T-cell (primary cell): ENCODE measurements at regions of chr11 and their contacts with region 1.

Region 1: GRCh38 chr11:46616998-46617675 is at the starts of genes ATG13 and HARBI1:
- DNase-seq: peak; percentile 77 to 95 (median 90)
- ATAC-seq: peak; percentile 96 to 98 (median 97)
- H3K4me3 ChIP-seq: peak within 1 kb of the TSS; percentile 85 to 99
- H3K4me3 Mint-ChIP-seq: peak within 1 kb of the TSS; percentile 92 to 99 (median 94)
- H3K27ac ChIP-seq: peak within 1 kb of the TSS; percentile 98
- H3K27ac Mint-ChIP-seq: peak within 1 kb of the TSS; percentile 100
- H3K4me1 ChIP-seq: peaks cover 14 to 31% of the 10 kb centered on the region in 2 experiments
- H3K4me1 Mint-ChIP-seq: peaks cover 44 to 51% (median 48%) of the 10 kb centered on the region in 3 donors
- H3K27me3 ChIP-seq: no peaks in the 10 kb centered on the region
- H3K27me3 Mint-ChIP-seq: no peaks in the 10 kb centered on the region
- total RNA-seq, gene ATG13: 91.8 to 115 (median 102) TPM
- total RNA-seq, gene HARBI1: 6.7 to 17.3 (median 10.3) TPM

Region 2: DNA sequence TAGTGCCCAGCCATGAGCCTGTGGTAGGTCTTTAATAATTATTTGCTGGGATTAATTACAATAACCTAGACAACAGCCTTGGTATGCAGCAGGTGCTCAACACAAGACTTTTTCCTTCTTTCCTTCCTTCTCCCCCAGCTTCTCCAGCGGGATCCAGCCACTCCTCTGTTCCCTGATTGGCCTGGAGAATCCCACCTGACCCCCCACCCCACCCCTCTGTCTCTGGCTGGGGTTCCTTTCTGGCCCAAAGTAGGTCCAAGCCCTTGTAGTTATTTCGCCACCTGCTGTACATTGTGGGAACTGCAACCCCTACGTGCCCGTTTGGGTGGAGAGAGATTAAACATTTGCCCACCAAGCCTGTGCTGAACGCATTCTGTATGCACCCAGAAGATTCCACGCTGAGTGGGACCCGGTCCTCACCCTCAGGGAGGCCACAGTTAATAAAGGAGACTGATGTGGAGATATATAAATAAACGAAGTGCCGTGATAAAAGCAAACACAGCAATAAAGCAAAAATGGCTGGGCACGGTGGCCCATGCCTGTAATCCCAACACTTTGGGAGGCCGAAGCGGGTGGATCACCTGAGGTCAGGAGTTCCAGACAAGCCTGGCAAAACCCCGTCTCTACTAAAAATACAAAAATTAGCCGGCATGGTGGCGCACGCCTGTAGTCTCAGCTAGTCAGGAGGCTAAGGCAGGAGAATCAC is 302.0 kb before region 1 on chr11:
- CTCF ChIA-PET with region 1: no interaction called
- POLR2A ChIA-PET with region 1: interaction called in 1 of 2 experiments, 10 read pairs
- DNase-seq: peak; percentile 26 to 86 (median 64)
- ATAC-seq: peak; percentile 63 to 81 (median 72)
- H3K4me3 ChIP-seq: no peak overlapping the region
- H3K4me3 Mint-ChIP-seq: no peak overlapping the region
- H3K27ac ChIP-seq: no peak overlapping the region
- H3K27ac Mint-ChIP-seq: peak overlapping the region in 1 of 2 donors; percentile 81
- H3K4me1 ChIP-seq: peaks cover 18 to 31% of the 10 kb centered on the region in 2 experiments
- H3K4me1 Mint-ChIP-seq: peaks cover 20 to 32% (median 22%) of the 10 kb centered on the region in 3 donors
- H3K27me3 ChIP-seq: peaks cover 0 to 27% of the 10 kb centered on the region in 2 experiments
- H3K27me3 Mint-ChIP-seq: no peaks in the 10 kb centered on the region

Region 3: GRCh38 chr11:46489661-46490560 is 127.2 kb before region 1 on chr11:
- CTCF ChIA-PET with region 1: interaction called, 3 to 32 read pairs
- POLR2A ChIA-PET with region 1: interaction called in 1 of 2 experiments, 5 read pairs
- DNase-seq: peak in 25 of 35 experiments; percentile 2 to 55 (median 12)
- ATAC-seq: peak; percentile 52 to 66 (median 65)
- H3K4me3 ChIP-seq: no peak overlapping the region
- H3K4me3 Mint-ChIP-seq: no peak overlapping the region
- H3K27ac ChIP-seq: no peak overlapping the region
- H3K27ac Mint-ChIP-seq: no peak overlapping the region
- H3K4me1 ChIP-seq: no peaks in the 10 kb centered on the region
- H3K4me1 Mint-ChIP-seq: peaks cover 5 to 14% (median 7%) of the 10 kb centered on the region in 3 donors
- H3K27me3 ChIP-seq: no peaks in the 10 kb centered on the region
- H3K27me3 Mint-ChIP-seq: no peaks in the 10 kb centered on the region

Region 4: DNA sequence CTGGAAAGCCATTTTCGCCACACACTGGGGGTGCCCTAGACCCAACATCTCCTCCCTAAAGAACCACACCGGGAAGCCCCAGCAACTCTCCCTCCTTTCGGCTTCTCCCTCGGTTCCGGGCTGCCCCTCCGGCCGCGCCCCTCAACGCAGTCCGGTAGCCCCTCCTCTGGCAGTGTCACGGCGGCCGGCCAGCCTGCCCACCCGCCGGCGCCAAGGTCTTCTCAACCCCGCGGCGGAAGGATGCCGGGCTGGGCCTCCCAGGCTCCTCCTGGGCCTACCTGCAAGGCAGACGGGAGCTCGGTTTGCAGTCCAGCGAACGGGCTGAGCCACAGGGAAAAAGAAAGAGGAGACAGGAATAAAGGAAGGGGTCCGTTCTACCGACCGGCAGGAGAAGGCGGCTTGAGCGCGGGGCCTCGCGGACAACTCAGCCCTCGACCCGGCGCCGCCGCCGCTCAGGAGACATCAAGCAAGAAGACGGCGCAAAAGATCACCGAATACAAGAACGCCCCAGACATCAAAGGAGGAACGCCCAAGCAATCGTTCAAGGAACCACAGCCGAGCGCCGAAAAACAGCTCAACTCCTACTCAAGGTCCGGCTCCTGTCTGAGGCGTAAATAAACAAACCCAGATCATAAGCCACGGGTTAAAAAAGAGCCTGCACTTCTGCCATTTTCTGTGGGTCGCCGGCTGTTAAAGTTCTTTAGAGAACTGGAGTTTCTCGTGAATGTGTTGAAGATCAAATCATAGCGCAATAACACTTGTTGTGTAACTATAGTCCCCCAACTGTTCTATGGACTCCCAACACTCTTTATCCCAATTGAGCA is 23.4 kb before region 1 on chr11 and contains the start of gene AMBRA1:
- CTCF ChIA-PET with region 1: interaction called, 10 to 16 read pairs
- POLR2A ChIA-PET with region 1: interaction called, 3 to 7 read pairs
- DNase-seq: peak; percentile 67 to 88 (median 75)
- ATAC-seq: peak; percentile 92 to 93 (median 92)
- H3K4me3 ChIP-seq: peak within 1 kb of the TSS; percentile 81 to 90
- H3K4me3 Mint-ChIP-seq: peak within 1 kb of the TSS; percentile 96 to 98 (median 96)
- H3K27ac ChIP-seq: peak within 1 kb of the TSS; percentile 30
- H3K27ac Mint-ChIP-seq: peak within 1 kb of the TSS; percentile 94
- H3K4me1 ChIP-seq: peaks cover 12 to 31% of the 10 kb centered on the region in 2 experiments
- H3K4me1 Mint-ChIP-seq: peaks cover 43 to 50% (median 45%) of the 10 kb centered on the region in 3 donors
- H3K27me3 ChIP-seq: no peaks in the 10 kb centered on the region
- H3K27me3 Mint-ChIP-seq: no peaks in the 10 kb centered on the region
- total RNA-seq, gene AMBRA1: 35.5 to 49.7 (median 42.7) TPM

Region 5: DNA sequence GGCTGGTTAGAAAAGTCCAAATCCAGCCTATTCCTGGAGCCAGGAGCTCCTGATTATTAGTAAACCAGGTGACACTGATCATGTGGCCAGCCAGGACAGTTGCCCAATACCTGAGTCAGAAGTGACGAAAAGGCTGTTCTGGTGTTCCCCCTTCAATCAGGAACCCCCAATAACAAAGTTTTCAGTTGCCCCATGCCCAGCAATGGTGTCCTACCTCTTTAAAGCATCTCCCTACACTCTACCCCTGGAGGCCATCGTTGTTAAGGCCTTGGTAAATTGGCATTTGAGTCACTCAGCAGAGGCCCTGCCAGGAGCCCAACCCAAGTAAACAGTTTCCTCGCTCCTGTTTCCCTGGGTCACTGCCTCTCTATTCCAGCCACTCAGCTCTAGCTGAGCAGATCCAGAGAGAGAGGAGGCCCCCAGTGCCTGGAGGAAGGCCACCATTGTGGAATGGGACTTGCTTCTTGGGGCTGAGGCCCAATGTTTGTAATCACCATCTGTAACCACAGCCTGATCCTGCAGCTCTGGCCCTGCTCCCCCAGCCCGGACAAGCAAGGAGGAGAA is 58.2 kb after region 1 on chr11:
- CTCF ChIA-PET with region 1: interaction called in 1 of 2 experiments, 10 read pairs
- POLR2A ChIA-PET with region 1: interaction called, 3 to 12 read pairs
- DNase-seq: no peak
- ATAC-seq: no peak
- H3K4me3 ChIP-seq: peak overlapping the region in 1 of 2 donors; percentile 29
- H3K4me3 Mint-ChIP-seq: peak overlapping the region in 1 of 3 donors; percentile 67
- H3K27ac ChIP-seq: peak overlapping the region; percentile 80
- H3K27ac Mint-ChIP-seq: peak overlapping the region; percentile 96 to 97
- H3K4me1 ChIP-seq: peaks cover 56 to 76% of the 10 kb centered on the region in 2 experiments
- H3K4me1 Mint-ChIP-seq: peaks cover 67 to 75% (median 73%) of the 10 kb centered on the region in 3 donors
- H3K27me3 ChIP-seq: no peaks in the 10 kb centered on the region
- H3K27me3 Mint-ChIP-seq: no peaks in the 10 kb centered on the region